Dorsolateral prefrontal cortex (tissue), 120 donors: ENCODE measurements at regions of chr1 and their contacts with region 1.

Region 1: DNA sequence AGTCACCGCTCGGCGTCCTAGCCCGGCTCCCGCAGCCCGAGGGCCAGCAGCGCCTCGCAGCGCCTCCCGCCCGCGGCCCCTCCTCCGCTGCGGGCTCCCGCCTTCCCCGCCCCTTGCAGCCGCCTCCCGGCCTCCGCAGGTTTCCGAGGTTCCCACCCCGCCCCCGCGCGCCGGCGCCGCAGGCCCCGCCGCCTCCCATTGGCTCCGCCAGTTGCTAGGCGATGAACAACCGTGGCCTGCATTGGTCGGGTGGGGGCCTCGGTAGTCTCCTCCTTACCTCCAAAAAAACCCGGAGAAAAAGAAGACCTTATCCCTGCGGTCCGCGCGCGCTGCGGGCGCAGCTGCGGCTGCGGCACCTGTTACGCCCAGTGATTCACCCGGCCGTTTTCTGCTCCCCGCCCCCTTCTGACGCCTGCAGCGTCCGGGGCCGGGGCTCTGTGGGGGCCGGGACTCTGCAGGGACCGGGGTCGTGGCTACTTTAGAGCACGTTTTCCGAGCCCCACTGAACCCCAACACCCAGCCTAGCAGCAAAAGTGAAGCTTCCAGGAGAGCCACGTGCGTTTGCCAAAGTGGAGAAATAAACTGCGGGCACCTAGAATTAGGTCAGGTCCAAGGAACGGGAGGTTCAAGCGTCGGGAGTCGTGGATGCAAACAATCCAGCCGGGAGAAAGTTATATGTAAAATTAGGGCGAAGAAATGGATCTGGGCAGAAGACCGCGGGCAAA is at the start of gene SSX2IP:
- DNase-seq: peak; percentile 92 to 98 (median 96)
- H3K4me3 ChIP-seq: peak within 1 kb of the TSS; percentile 65 to 95 (median 81)
- H3K27ac ChIP-seq: peak within 1 kb of the TSS; percentile 71 to 98 (median 92)
- H3K27me3 ChIP-seq: no peaks in the 10 kb centered on the region
- CTCF ChIP-seq: peak in 3 of 56 donors; percentile 8 to 13 (median 10)
- total RNA-seq, gene SSX2IP: 27.5 to 131 (median 86.0) TPM

Region 2: GRCh38 chr1:84722794-84723193 is 32.2 kb after region 1 on chr1:
- intact Hi-C with region 1: loop called in 1 of 2 experiments (anchors 2 kb)
- DNase-seq: no peak
- H3K4me3 ChIP-seq: no peak overlapping the region
- H3K27ac ChIP-seq: no peak overlapping the region
- H3K27me3 ChIP-seq: no peaks in the 10 kb centered on the region
- CTCF ChIP-seq: no peak